Right lobe of liver (tissue), 6 donors: ENCODE measurements at regions of chrX and their contacts with region 1.

Region 1: DNA sequence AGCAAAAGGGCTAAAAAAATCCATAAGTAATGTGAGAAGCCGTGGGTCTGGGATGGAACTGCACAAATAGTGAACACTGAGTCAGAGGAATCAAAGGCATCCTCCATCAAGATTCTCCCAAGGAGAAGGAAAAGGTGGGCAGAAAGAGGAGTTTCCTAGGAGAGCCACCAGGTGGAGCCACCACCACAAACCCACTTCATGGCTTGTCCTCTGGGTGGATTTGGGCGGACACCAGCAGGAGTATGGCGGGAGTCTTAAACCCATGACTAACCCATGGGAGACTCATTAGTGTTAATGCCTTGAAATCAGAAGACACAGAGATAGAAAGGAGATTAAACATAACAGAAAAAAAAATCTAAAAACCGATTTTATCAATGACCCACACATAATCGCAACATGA is 147.7 kb downstream of the SH3KBP1 start:
- DNase-seq: peak in 2 of 3 donors; percentile 49
- ATAC-seq: peak; percentile 82 to 89 (median 84)
- H3K4me3 ChIP-seq: no peak overlapping the region
- H3K27ac ChIP-seq: no peak overlapping the region
- H3K4me1 ChIP-seq: no peaks in the 10 kb centered on the region
- H3K27me3 ChIP-seq: no peaks in the 10 kb centered on the region
- CTCF ChIP-seq: peak; percentile 47 to 75 (median 67)
- POLR2A ChIP-seq: no peak

Region 2: GRCh38 chrX:19602866-19603622 is 136.6 kb before region 1 on chrX:
- intact Hi-C with region 1: no loop called
- DNase-seq: no peak
- ATAC-seq: no peak
- H3K4me3 ChIP-seq: no peak overlapping the region
- H3K27ac ChIP-seq: no peak overlapping the region
- H3K4me1 ChIP-seq: no peaks in the 10 kb centered on the region
- H3K27me3 ChIP-seq: no peaks in the 10 kb centered on the region
- CTCF ChIP-seq: no peak
- POLR2A ChIP-seq: no peak

Region 3: DNA sequence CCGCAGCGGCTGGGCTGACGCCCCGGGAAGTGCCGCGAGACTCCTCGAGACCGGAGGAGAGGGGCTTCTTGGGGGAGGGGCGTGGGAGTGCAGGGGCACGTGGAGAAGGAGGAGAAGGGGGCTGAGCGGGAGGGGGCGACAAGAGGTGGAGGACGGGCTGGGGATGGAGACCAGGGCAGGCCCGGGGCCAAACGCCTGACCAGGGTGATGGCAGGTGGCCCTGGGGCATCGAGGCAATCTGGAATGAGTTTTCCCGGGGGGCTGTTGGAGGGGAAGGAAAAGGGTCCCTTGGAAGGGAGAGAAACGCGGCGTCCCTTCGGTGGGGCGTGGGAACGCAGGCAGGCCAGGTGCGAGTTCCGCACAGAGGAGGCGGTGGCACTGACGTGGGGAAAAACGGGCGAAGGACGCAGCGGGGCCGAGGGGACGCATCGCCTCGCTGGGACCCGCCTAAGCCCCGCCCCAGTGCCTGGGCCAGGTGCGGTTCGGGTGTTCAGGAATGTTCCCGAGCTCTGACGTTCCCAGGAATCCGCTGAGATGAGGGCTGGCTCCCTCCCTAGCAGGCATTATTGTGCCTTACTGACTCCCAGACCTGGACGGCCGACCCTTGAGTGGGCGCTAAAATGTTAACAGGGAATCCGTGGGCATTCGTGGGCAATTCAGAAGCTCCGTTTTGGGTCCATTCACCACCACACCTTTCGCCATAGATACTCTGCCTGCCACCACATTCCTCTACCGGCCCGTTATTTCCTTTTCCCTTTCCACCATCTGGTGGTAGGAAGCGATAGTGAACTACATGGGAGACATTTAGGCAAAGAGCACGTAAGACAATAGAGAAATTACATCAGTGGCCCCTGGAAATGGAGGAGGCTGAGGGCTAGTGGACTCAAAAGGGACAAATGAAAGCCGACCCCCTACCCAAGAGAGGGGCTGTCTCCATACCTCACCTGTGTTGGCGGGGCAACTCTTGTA is 148.5 kb after region 1 on chrX:
- intact Hi-C with region 1: loop called in 1 of 2 experiments (anchors 10 kb)
- DNase-seq: peak; percentile 65 to 74 (median 68)
- ATAC-seq: peak; percentile 76 to 84 (median 82)
- H3K4me3 ChIP-seq: peak overlapping the region; percentile 40 to 65 (median 59)
- H3K27ac ChIP-seq: peak overlapping the region; percentile 62 to 73 (median 72)
- H3K4me1 ChIP-seq: no peaks in the 10 kb centered on the region
- H3K27me3 ChIP-seq: no peaks in the 10 kb centered on the region
- CTCF ChIP-seq: peak; percentile 41 to 72 (median 46)
- POLR2A ChIP-seq: no peak

Region 4: GRCh38 chrX:20116579-20117240 is 377.0 kb after region 1 on chrX and contains the start of gene MAP7D2:
- intact Hi-C with region 1: no loop called
- DNase-seq: no peak
- ATAC-seq: peak in 1 of 4 donors; percentile 28
- H3K4me3 ChIP-seq: peak within 1 kb of the TSS in 1 of 3 donors; percentile 13
- H3K27ac ChIP-seq: no peak within 1 kb of the TSS
- H3K4me1 ChIP-seq: no peaks in the 10 kb centered on the region
- H3K27me3 ChIP-seq: peaks cover 0 to 16% of the 10 kb centered on the region in 2 donors
- CTCF ChIP-seq: no peak
- POLR2A ChIP-seq: no peak
- total RNA-seq, gene MAP7D2: 0.11 to 0.49 (median 0.30) TPM in 4 of 6 experiments, not detected in the others